MCF 10A (cell line): ENCODE measurements at regions of chr6 and their contacts with region 1.

Region 1: GRCh38 chr6:30169658-30170614 is 6.6 kb downstream of the TRIM15 start:
- DNase-seq: peak; percentile 63
- H3K4me3 Mint-ChIP-seq: no peak overlapping the region
- H3K27ac Mint-ChIP-seq: no peak overlapping the region
- H3K4me1 Mint-ChIP-seq: no peaks in the 10 kb centered on the region
- H3K27me3 Mint-ChIP-seq: peaks cover 13% of the 10 kb centered on the region
- CTCF ChIP-seq: peak; percentile 81

Region 2: DNA sequence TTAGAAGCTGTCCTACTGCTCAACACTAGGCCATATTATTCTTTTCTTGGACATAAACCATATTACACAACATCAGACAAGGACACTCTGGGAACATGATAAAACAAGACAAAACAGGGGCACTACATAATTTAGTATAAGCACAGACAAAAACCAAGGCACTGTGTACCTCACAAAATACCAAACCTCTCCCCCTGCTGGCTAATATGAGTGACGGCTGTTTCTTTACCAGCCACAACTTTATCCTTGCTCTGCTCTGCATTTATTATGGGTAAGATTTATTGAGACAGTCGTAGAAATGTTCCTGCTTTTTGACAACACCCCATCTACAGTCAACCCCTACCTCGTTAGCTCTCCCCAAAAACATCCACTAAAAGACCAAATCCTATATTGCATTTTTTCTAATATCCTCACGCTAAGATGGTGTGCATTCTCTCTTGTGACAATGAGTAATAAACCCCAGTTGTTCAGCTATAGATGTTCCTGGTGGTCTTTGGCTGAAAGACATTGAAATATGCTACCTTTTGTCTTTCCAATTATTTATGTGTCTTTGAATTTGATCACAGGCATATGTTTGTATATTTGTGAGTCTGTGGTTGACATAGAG is 132.7 kb before region 1 on chr6:
- CTCF ChIA-PET with region 1: no interaction called
- POLR2A ChIA-PET with region 1: no interaction called
- intact Hi-C with region 1: loop called (anchors 1 kb)
- DNase-seq: peak; percentile 45
- H3K4me3 Mint-ChIP-seq: no peak overlapping the region
- H3K27ac Mint-ChIP-seq: no peak overlapping the region
- H3K4me1 Mint-ChIP-seq: peaks cover 23% of the 10 kb centered on the region
- H3K27me3 Mint-ChIP-seq: no peaks in the 10 kb centered on the region
- CTCF ChIP-seq: peak; percentile 52

Region 3: GRCh38 chr6:30154709-30155519 is 15.0 kb before region 1 on chr6:
- CTCF ChIA-PET with region 1: interaction called, 16 read pairs
- POLR2A ChIA-PET with region 1: interaction called, 3 read pairs
- intact Hi-C with region 1: no loop called
- DNase-seq: peak; percentile 93
- H3K4me3 Mint-ChIP-seq: peak overlapping the region; percentile 5
- H3K27ac Mint-ChIP-seq: peak overlapping the region; percentile 44
- H3K4me1 Mint-ChIP-seq: peaks cover 26% of the 10 kb centered on the region
- H3K27me3 Mint-ChIP-seq: no peaks in the 10 kb centered on the region
- CTCF ChIP-seq: no peak